Left ventricle myocardium inferior (tissue), 1 donor: ENCODE measurements at regions of chr7 and their contacts with region 1.

Region 1: DNA sequence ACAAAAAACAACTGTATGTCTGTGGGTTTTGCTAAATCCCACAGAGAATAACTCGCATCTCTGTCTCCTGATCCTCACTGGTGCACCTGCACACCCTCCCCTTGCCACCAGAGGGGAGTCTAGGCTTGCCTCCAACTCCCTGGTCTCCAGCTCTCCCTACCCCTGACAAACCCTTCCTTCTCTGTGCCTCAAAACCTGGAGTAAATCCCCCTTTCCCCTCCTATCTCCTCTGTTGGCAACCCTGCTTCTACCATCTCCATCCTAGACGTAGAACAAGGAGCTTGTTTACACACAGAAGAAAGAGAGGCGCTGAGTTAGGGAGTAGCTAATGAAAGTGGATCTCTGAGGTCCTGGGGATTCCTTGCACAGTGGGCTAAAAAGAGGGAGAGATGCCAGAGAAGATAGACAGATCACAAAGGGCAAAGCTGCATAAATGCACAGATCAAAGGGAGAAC is 6.0 kb downstream of the MBLAC1 start:
- DNase-seq: peak; percentile 46
- H3K4me3 ChIP-seq: no peak overlapping the region
- H3K27ac ChIP-seq: no peak overlapping the region
- H3K4me1 ChIP-seq: peaks cover 21% of the 10 kb centered on the region
- H3K27me3 ChIP-seq: no peaks in the 10 kb centered on the region
- CTCF ChIP-seq: peak; percentile 85

Region 2: DNA sequence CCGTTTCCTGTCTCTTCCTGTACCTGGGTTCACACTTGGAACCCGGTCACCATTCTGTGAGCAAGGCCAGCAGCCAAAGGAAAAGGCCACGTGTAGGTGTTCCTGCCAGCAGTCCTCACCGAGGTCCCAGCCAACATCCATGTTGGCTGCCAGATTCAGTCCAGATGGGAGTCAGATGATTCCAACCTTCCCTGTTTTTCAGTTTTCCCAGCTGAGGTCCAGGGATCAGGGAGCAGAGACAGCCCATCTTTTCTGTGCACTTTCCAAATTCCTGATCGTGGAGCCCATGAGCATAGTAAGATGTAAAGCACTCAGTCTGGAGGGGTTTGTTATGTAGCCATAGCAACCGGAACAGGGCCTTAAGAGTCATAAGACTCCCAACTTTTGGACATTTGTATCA is 83.2 kb after region 1 on chr7:
- intact Hi-C with region 1: loop called (anchors 5 kb)
- DNase-seq: peak; percentile 50
- H3K4me3 ChIP-seq: no peak overlapping the region
- H3K27ac ChIP-seq: peak overlapping the region; percentile 36
- H3K4me1 ChIP-seq: peaks cover 10% of the 10 kb centered on the region
- H3K27me3 ChIP-seq: no peaks in the 10 kb centered on the region
- CTCF ChIP-seq: no peak